Activated T-helper 1 cell treated with anti-CD3 and anti-CD28 coated beads, Interleukin-12 subunit alpha, Interleukin-12 subunit beta, Interleukin-2, Interleukin-4 antibody, amounts not matched to agents 30 ng/mL and 10 ng/mL and 1 ng/mL, durations not matched to agents 14 hours and 24 hours and 36 hours (primary cell): ENCODE measurements at regions of chr5 and their contacts with region 1.

Region 1: DNA sequence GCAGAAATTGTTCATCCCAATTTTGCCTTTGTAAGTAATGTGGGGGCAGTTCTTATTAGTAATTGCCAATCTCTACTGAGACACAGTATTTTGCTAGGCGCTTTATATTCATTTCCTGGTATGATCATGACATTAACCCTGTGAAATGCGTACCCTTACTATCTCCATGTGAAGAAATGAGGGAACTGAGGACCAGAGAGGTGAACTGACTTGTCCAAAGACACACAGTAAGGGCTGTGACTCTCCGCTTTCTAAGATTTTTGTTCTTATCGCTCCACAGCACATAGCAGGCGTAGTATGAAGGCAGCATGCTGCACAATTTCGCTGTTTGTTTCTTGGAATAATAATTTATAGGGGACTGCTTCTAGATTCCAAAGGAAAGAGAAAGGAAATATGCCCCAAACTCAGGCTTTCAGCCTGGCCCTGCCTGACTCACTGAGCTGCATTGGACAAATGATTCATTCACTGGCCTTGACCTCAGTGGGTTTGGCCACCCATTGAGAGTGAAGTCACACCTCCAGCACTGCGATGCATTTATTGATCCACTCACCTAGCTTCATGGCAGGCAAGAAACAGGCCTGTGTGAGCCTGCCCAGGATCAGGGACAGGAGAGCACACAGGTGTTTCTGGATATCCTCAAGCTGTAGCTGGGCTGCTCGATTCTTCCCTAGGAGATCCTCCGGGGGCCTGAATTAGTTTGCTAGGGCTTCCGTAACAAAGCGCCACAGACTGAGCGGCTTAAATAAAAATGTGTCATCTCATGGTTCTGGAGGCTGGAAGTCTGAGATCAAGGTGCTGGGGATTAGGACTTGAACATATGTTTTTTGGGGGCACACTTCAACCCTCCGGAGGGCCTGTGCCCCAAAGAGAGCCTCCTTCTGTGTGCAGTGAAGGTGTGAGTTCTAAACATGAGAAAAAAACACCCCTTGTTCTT is 7.2 kb upstream of the DUSP1 start:
- DNase-seq: no peak
- H3K4me3 Mint-ChIP-seq: peak overlapping the region; percentile 55
- H3K27ac Mint-ChIP-seq: peak overlapping the region; percentile 94
- H3K4me1 Mint-ChIP-seq: peaks cover 45% of the 10 kb centered on the region
- H3K27me3 Mint-ChIP-seq: no peaks in the 10 kb centered on the region

Region 2: DNA sequence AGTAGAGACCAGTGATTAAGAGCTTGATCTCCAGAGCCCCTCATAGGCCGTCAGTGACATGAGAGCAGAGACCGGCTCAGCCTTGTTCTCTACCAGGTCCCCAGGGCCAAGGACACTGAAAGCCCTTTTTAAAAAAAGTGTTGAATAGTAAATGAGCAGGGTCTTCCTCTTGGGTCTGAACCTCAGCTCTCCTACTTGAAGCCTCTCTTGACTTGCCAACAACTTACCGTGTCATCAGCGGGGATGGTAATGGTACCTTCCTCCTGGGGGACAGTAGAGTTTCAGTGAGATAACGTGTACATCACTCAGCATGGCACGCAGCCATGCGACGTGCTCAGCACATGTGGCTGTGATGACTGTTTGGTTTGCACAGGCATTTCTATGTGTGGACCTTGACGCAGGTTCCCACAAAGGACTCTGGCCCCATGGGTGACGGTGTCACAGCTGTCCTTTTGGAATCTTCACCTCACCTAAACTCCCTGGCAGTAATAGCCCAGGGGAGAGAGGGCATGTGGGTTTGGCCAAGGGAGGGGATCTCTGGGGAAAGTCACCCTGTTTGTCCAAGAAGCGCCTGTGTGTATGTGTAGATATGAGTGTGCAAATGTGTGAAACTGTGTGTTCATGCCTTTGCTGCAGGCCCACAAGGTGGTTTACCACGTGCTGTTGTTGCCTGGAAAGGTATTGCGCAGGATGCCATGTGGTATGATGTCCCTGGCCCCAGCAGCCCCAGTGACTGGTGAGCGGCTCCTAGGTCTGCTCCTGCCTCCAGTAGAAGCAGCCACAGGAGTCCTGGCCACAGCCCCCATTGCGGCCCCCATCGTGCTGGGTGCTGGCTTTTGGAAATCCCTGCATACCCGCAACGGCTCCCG is 74.6 kb after region 1 on chr5:
- intact Hi-C with region 1: loop called (anchors 1 kb)
- DNase-seq: no peak
- H3K4me3 Mint-ChIP-seq: no peak overlapping the region
- H3K27ac Mint-ChIP-seq: peak overlapping the region; percentile 69
- H3K4me1 Mint-ChIP-seq: peaks cover 33% of the 10 kb centered on the region
- H3K27me3 Mint-ChIP-seq: no peaks in the 10 kb centered on the region